ENCODE measurements at regions of chr11 and their contacts with region 1.

Region 1: GRCh38 chr11:107549253-107549953 is 16.1 kb downstream of the ALKBH8 start:
- DNase-seq: peak; percentile 43
- ATAC-seq: peak; percentile 36
- H3K4me3 Mint-ChIP-seq: no peak overlapping the region
- H3K27ac Mint-ChIP-seq: no peak overlapping the region
- H3K4me1 Mint-ChIP-seq: no peaks in the 10 kb centered on the region
- H3K27me3 Mint-ChIP-seq: no peaks in the 10 kb centered on the region

Region 2: DNA sequence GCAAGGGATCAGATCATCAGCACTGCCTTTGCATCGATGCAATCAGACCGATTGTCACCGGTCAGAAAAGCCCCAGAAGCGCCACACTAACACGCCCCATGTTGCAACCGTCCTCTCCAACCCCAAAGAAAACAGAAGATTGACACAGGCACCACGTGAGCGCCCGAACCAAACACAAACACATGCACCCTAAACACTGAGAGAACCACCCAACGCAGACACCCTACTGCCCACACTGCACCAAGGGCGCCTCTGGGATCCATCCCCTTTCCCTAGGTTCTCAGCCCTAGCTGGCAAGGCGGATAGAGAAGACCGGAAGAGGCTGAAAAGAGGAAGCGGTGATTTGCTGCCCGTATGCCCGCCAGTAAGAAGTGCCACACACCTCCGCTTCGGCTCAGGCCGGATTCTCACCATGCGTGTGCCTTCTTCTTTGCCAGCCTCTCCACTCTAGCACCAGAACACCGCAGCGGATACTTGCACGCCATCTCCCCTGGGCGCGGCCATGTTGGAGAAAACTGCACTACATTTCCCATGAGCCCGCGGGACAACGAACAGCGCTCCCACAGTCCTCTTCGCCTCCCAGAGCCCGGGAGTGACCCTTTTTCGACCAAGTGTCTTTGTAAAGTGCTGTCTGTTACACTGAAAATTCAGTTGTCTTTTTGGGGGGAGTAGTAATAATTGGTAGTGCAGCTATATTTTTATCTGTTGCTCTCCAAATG is 16.0 kb after region 1 on chr11 and contains the start of gene ALKBH8:
- CTCF ChIA-PET with region 1: interaction called, 38 read pairs
- DNase-seq: peak; percentile 89
- ATAC-seq: peak; percentile 95
- H3K4me3 Mint-ChIP-seq: peak within 1 kb of the TSS; percentile 92
- H3K27ac Mint-ChIP-seq: peak within 1 kb of the TSS; percentile 95
- H3K4me1 Mint-ChIP-seq: peaks cover 52% of the 10 kb centered on the region
- H3K27me3 Mint-ChIP-seq: no peaks in the 10 kb centered on the region
- total RNA-seq, gene ALKBH8: 8.6 to 11.2 TPM